ENCODE measurements at regions of chr4 and their contacts with region 1.

Region 1: DNA sequence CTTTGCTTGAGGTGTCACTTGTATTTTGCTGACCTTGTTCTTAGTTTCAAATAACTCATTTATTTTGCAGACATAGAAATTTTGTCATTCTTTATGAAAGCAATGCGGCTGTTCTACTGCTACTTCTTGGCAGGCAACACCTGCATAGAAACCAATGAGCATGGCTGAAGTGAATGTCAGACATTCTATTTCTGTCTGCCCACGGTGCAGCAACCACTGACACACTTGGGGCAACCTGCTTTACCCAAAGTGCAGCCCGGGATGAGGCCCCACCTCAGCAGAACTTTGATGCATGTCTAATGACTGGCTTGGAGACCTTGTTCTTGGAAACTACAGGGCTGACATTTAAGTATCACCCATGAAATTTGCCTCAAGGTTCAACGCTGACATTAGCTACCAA is 93.6 kb downstream of the RBM47 start:
- DNase-seq: no peak
- ATAC-seq: no peak
- H3K4me3 ChIP-seq: no peak overlapping the region
- H3K27ac ChIP-seq: no peak overlapping the region
- H3K4me1 ChIP-seq: no peaks in the 10 kb centered on the region
- H3K27me3 ChIP-seq: no peaks in the 10 kb centered on the region
- CTCF ChIP-seq: no peak

Region 2: DNA sequence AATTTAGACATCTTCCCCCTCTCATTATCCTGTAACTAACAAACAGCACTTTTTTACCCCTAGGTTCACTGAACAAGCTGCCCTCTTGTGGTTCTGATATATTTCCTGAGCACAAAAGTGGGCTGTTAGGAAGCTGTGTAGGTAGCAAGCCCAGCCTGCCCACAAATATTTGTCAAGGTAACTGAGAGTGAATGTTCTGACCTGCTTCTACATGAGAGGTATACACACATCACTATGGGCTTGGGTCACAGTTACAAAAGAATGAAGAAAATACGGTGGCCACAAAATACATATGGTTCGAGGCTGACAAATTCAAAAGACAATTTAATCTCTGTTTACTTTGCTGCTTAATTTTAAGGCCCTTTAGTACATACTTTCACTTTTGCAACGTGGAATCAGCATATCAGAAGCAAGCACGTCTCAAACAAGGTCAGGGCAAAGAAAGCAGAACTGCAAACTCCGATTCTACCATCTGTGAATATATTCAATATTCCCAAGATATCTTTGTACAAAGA is 15.0 kb after region 1 on chr4:
- CTCF ChIA-PET with region 1: interaction called, 14 read pairs
- POLR2A ChIA-PET with region 1: no interaction called
- intact Hi-C with region 1: no loop called
- DNase-seq: peak; percentile 53
- ATAC-seq: peak; percentile 60
- H3K4me3 ChIP-seq: peak overlapping the region; percentile 35; the same call in 1 of the 2 replicates
- H3K27ac ChIP-seq: peak overlapping the region; percentile 56
- H3K4me1 ChIP-seq: peaks cover 21% of the 10 kb centered on the region
- H3K27me3 ChIP-seq: no peaks in the 10 kb centered on the region
- CTCF ChIP-seq: peak; percentile 59